IMR-90 (cell line): ENCODE measurements at regions of chr3 and their contacts with region 1.

Region 1: DNA sequence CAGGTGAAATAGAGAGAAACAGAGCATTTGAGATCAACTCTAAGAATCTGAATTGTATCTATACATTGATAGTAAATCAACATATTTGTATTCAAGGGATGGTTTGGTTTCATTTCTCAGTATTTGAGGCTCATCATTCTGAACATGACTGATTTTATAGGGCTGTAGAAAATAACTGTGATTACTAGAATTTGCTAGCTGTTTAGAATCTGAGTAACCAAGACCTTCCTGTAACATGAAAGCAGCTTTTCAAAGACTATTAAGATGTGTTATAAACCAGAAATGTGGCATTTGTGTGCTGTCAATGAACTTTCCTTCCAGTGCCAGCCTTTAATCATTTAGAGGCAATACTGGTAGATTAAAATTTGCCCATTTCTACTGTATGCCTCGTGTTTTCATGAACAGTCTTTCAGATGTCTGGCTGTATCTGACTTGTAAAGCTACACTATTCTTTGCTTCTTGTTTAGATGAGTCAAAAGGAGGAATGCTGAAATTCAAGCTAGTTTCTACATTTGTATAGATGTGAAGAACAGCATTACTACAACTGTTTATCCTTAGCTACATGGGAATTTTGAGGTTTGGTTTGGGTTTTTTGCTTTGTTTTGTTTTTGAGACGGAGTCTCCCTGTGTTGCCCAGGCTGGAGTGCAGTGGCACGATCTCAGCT is 137.3 kb upstream of the BHLHE40 start:
- DNase-seq: peak; percentile 89
- ATAC-seq: peak; percentile 99
- H3K4me3 ChIP-seq: no peak overlapping the region
- H3K27ac ChIP-seq: peak overlapping the region; percentile 78; the same call in 1 of the 2 replicates
- H3K4me1 ChIP-seq: peaks cover 6% of the 10 kb centered on the region
- H3K27me3 ChIP-seq: no peaks in the 10 kb centered on the region
- CTCF ChIP-seq: no peak
- POLR2A ChIP-seq: no peak
- RAD21 ChIP-seq: no peak

Region 2: DNA sequence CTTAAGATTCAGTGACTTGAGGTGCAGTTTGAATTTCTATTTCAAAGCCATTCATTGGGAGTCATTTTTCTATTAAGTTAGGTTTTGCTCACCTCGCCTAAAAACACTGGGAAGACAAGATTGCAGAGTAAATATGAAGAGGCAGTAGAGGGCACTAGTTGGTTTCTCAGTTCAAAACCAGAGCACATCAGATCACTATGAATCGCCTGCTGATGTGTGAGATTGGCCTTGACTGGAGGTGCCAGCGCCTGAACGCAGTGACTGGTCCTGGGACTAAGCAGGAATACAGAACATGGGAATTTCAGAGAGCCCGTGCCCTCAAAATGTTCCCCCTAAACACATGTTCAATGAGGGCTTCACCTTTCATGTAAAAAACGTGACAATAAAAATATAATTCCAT is 119.8 kb before region 1 on chr3:
- CTCF ChIA-PET with region 1: interaction called, 7 read pairs
- POLR2A ChIA-PET with region 1: no interaction called
- dilution Hi-C with region 1: no loop called
- in situ Hi-C with region 1: no loop called
- intact Hi-C with region 1: loop called (anchors 5 kb)
- DNase-seq: peak; percentile 73
- ATAC-seq: peak; percentile 47
- H3K4me3 ChIP-seq: no peak overlapping the region
- H3K27ac ChIP-seq: peak overlapping the region; percentile 93
- H3K4me1 ChIP-seq: peaks cover 17% of the 10 kb centered on the region
- H3K27me3 ChIP-seq: no peaks in the 10 kb centered on the region
- CTCF ChIP-seq: peak; percentile 53
- POLR2A ChIP-seq: no peak
- RAD21 ChIP-seq: peak; percentile 58

Region 3: DNA sequence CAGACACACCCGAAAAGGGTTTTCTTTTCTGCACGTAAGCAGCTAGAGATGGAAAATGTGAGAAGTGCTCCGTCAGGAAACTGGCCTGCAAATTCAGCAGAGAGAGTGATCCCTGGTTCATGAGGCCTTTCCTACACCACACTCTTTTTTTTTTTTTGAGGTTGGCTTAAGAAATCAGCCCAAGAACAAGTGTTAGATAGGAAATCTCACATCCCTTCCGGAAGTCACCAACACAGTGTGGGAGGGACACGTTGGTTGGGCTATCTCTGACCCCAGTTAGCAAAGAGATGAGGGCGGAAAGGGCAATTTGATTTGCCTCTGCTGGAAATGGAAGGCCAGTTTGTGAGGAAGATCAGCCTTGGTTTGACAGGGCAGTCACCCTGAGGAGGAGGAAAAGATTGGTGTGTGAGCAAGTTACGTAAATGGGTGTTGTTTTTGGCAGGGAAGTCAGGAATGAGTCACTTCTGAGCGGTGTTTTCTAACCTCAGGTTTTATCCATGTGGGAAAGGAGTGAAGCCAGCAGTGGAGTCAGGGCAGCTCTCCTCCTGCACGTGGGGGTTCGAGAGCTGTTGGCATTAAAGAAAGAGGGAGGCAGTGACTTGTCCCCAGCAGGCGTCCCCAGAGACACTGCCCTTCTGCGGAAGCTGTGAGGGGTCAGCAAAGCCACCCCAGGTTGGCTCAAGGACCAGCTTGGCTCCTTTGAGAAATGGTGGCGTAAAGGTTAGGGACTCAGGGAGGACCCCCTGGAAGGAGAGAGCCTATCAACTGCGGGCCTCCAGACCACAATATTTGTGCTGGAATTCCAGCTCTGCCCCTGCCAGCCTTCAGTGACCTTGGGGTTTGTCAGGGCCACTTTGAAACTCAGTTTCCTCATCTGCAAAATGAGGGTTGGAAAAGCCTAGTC is 100.3 kb before region 1 on chr3:
- CTCF ChIA-PET with region 1: no interaction called
- POLR2A ChIA-PET with region 1: no interaction called
- dilution Hi-C with region 1: no loop called
- in situ Hi-C with region 1: no loop called
- intact Hi-C with region 1: loop called (anchors 5 kb)
- DNase-seq: peak; percentile 99
- ATAC-seq: peak; percentile 58
- H3K4me3 ChIP-seq: no peak overlapping the region
- H3K27ac ChIP-seq: no peak overlapping the region
- H3K4me1 ChIP-seq: peaks cover 18% of the 10 kb centered on the region
- H3K27me3 ChIP-seq: peaks cover 8% of the 10 kb centered on the region
- CTCF ChIP-seq: 0 out of 2 replicates have a peak, but pooled peaks have one; percentile 14
- POLR2A ChIP-seq: no peak
- RAD21 ChIP-seq: peak; percentile 24; the same call in 1 of the 2 replicates